A673 (cell line): ENCODE measurements at regions of chr9 and their contacts with region 1.

Region 1: GRCh38 chr9:105414947-105415661 is 32.7 kb upstream of the FSD1L start:
- DNase-seq: peak; percentile 66
- H3K4me3 ChIP-seq: no peak overlapping the region
- H3K27ac ChIP-seq: no peak overlapping the region
- H3K4me1 ChIP-seq: no peaks in the 10 kb centered on the region
- H3K27me3 ChIP-seq: no peaks in the 10 kb centered on the region
- CTCF ChIP-seq: peak; percentile 91

Region 2: DNA sequence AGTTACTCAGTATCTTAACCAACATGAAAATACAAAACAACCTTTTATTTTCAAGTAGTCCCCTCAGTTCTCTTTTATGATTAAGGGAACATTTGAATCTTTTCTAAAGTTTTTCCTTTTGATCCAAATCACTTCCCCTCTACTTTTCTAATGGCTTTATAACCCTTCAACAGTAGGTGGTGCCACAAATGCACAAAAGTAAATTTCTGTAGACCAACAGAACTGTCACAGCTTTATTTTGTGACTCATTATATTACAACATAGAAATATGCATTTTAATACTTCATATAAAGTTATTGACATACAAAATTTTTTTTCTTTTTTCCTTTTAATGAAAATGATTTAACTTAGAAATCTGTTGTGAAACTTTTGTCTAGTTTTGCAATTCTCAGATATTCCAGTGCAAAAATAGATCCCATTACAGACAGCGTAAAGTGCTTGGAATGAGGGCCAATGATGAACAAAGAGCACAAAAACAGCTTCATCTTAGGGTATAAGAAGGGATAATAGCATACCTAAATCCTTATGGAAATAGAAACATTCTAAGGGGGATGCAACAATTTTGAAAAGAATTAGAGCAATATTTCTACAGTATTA is 634.2 kb before region 1 on chr9:
- CTCF ChIA-PET with region 1: no interaction called
- POLR2A ChIA-PET with region 1: no interaction called
- intact Hi-C with region 1: loop called (anchors 2 kb)
- DNase-seq: peak; percentile 44
- H3K4me3 ChIP-seq: no peak overlapping the region
- H3K27ac ChIP-seq: no peak overlapping the region
- H3K4me1 ChIP-seq: no peaks in the 10 kb centered on the region
- H3K27me3 ChIP-seq: no peaks in the 10 kb centered on the region
- CTCF ChIP-seq: peak; percentile 57

Region 3: GRCh38 chr9:104863180-104863883 is 551.8 kb before region 1 on chr9:
- CTCF ChIA-PET with region 1: interaction called, 6 read pairs
- POLR2A ChIA-PET with region 1: no interaction called
- intact Hi-C with region 1: loop called (anchors 1 kb)
- DNase-seq: peak; percentile 76
- H3K4me3 ChIP-seq: no peak overlapping the region
- H3K27ac ChIP-seq: no peak overlapping the region
- H3K4me1 ChIP-seq: peaks cover 7% of the 10 kb centered on the region
- H3K27me3 ChIP-seq: no peaks in the 10 kb centered on the region
- CTCF ChIP-seq: peak; percentile 92